Tibial artery (tissue), 4 donors: ENCODE measurements at regions of chr3 and their contacts with region 1.

Region 1: DNA sequence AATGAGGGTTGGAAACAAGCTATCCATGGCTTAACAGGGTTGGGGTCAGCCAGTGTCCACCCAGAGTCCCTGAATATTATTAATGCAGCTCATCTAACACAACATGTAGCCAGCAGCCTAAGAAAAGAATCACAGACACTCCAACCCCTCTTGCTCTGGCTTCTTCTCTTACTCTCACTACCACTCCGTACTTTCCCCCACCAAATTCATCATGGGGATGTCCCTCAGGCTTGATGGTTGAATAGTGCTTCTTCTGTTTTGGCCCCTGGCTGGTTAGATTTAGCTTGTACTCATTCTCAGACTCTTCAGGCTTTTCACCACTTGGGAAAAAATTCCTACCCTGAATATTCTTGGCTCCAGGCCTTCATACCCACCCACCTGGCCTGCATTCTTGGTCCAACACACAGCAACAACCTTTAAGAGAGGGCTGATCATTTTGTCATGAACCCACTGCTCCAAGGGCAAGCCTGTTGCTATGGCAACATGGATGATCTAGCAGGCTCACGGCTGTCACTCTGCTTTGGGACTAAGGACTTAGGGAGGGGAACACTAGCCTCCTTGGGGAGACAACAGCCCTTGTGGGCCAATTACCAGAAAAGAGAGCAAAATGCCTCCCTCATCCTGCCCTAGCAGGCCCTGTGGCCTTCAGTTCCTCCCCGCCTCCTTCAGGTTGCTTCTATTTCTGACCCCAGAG is 9.4 kb upstream of the MED12L start:
- DNase-seq: no peak
- H3K4me3 ChIP-seq: no peak overlapping the region
- H3K27ac ChIP-seq: no peak overlapping the region
- H3K4me1 ChIP-seq: no peaks in the 10 kb centered on the region
- H3K27me3 ChIP-seq: peaks cover 0 to 10% of the 10 kb centered on the region in 2 donors
- CTCF ChIP-seq: no peak

Region 2: DNA sequence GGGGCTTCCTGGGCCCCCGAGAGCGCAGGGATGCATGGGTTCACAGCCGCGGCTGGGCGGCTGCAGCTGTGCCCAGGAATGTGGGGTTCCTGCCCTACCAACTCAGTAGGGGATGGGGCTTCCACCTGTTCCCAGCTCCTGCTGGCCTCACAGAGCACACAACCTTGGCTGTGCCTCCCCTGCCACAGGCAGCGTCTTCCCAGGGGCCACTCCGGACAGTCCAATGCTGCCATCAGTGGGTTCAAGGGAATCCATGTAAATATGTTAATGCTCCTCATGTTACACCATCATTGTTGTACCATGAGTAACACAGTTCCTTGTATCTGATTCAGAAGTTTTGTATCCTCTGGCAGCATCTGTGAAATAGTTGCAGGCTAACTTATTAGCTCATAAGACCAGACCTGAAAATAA is 300.9 kb before region 1 on chr3:
- intact Hi-C with region 1: loop called (anchors 10 kb)
- DNase-seq: no peak
- H3K4me3 ChIP-seq: no peak overlapping the region
- H3K27ac ChIP-seq: no peak overlapping the region
- H3K4me1 ChIP-seq: no peaks in the 10 kb centered on the region
- H3K27me3 ChIP-seq: no peaks in the 10 kb centered on the region
- CTCF ChIP-seq: no peak